ENCODE measurements at regions of chr2 and their contacts with region 1.

Region 1: DNA sequence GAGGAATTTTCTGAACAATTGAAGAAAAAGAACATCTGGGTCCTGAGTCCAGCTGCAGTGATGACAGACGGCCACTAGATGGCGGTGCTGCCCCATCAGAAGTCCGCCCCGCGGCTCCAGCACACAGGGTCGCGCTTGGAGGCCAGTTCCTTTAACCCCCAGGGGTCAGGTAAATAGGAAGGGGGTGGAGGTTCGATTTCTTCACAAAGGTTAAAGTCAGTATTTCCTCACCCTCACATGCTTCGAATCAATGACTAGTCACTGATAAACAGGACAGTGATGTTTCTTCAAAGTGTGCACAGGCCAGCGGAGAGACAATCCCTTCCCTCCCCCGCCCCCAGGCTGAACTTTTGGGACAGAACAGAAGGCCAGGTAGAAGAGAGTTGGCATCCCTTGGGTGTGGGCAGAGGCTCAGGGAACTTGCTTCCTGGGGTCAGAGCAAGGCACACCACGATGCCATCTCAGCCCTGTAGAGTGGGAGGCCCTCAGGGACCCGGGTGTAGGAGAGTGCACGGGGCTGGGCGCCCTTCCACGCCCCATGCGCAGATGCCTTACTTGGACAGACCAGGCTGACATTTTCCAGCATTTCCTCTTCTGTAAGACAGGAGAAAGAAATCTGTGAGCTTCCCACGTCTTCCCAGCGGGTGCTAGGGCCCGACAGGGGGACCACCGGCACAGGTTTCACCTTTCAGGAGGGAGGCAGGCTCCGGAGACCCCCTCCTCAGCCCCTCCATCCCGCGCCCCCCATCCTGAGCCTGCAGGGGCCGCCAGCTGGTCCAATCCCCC is 722 bp downstream of the APOB start:
- DNase-seq: no peak
- ATAC-seq: peak; percentile 89
- H3K4me3 ChIP-seq: no peak overlapping the region
- H3K27ac ChIP-seq: no peak overlapping the region
- H3K4me1 ChIP-seq: no peaks in the 10 kb centered on the region
- H3K27me3 ChIP-seq: no peaks in the 10 kb centered on the region; a peak in 1 of 4 replicates
- CTCF ChIP-seq: peak; percentile 95 to 98 (median 97)
- EP300 ChIP-seq: no peak
- POLR2A ChIP-seq: no peak
- RAD21 ChIP-seq: peak; percentile 96

Region 2: DNA sequence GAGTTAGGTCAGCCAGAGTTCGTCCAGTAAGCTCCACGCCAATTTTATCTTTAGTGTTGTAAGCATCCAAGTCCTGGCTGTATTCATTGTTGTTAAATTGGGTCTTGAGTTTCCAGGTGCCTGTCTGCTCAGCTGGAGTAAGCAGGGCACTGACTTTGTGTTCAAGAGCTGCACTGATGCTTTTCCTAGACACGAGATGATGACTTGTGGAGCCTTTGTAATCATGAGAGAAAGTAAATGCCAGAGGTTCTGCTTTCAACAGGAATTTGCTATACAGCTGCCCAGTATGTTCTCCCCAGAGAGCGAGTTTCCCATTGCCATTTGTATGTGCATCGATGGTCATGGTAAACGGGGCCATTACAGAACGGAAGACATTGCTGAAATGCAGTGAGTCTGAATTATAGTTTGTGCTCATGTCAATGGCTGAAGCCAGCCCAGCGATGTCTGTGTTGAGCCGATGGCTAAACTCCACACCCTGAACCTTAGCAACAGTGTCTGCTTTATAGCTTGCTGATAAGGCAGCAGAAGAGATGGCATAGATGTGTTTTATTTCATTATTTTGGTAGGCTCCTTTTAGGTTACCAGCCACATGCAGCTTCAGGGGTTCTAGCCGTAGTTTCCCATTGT is 32.2 kb before region 1 on chr2:
- CTCF ChIA-PET with region 1: no interaction called
- POLR2A ChIA-PET with region 1: no interaction called
- RAD21 ChIA-PET with region 1: no interaction called
- SMC1A ChIA-PET with region 1: no interaction called
- in situ Hi-C with region 1: no loop called
- intact Hi-C with region 1: no loop called
- DNase-seq: no peak
- ATAC-seq: no peak
- H3K4me3 ChIP-seq: no peak overlapping the region
- H3K27ac ChIP-seq: no peak overlapping the region
- H3K4me1 ChIP-seq: no peaks in the 10 kb centered on the region
- H3K27me3 ChIP-seq: no peaks in the 10 kb centered on the region
- CTCF ChIP-seq: no peak
- EP300 ChIP-seq: no peak
- POLR2A ChIP-seq: no peak
- RAD21 ChIP-seq: no peak

Region 3: GRCh38 chr2:21118302-21118920 is 75.3 kb after region 1 on chr2:
- CTCF ChIA-PET with region 1: interaction called, 14 read pairs
- POLR2A ChIA-PET with region 1: no interaction called
- RAD21 ChIA-PET with region 1: interaction called, 4 read pairs
- SMC1A ChIA-PET with region 1: interaction called, 3 read pairs
- in situ Hi-C with region 1: loop called (anchors 5 kb)
- intact Hi-C with region 1: loop called (anchors 1 kb)
- DNase-seq: no peak
- ATAC-seq: peak; percentile 71
- H3K4me3 ChIP-seq: no peak overlapping the region
- H3K27ac ChIP-seq: no peak overlapping the region
- H3K4me1 ChIP-seq: no peaks in the 10 kb centered on the region
- H3K27me3 ChIP-seq: no peaks in the 10 kb centered on the region
- CTCF ChIP-seq: peak; percentile 39 to 54 (median 45); a peak in 4 of 6 replicates
- EP300 ChIP-seq: no peak
- POLR2A ChIP-seq: no peak
- RAD21 ChIP-seq: peak; percentile 45

Region 4: DNA sequence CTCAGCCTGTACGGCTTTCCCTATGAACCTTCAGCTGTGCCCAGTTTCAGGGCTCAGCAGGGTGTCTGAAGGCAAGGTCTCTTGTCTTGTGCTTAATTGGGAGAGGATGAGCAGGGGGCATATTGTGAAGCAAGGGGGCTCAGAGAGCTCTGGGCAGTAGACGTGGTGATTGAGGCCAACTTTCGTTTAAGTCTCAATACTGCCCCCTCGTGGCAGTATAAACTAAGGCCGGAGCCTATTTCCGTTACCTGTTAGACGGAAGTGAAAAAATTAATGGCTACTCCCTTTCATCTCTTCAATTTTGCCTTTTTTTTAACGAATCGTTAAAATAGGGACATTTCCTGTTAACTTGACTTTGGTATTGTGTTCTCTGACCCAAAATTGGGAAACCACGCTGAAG is 274.0 kb after region 1 on chr2:
- CTCF ChIA-PET with region 1: interaction called, 37 read pairs
- POLR2A ChIA-PET with region 1: no interaction called
- RAD21 ChIA-PET with region 1: interaction called, 11 read pairs
- SMC1A ChIA-PET with region 1: interaction called, 5 read pairs
- in situ Hi-C with region 1: loop called (anchors 5 kb)
- intact Hi-C with region 1: loop called (anchors 1 kb)
- DNase-seq: no peak
- ATAC-seq: peak; percentile 86
- H3K4me3 ChIP-seq: no peak overlapping the region
- H3K27ac ChIP-seq: no peak overlapping the region
- H3K4me1 ChIP-seq: no peaks in the 10 kb centered on the region
- H3K27me3 ChIP-seq: no peaks in the 10 kb centered on the region; a peak in 1 of 4 replicates
- CTCF ChIP-seq: peak; percentile 56 to 61 (median 58)
- EP300 ChIP-seq: no peak
- POLR2A ChIP-seq: no peak
- RAD21 ChIP-seq: peak; percentile 48; the same call in 1 of the 2 replicates